Activated B cell treated with CpG ODN at 0.5 μM for 24 hours (primary cell): ENCODE measurements at regions of chr13 and their contacts with region 1.

Region 1: GRCh38 chr13:27449936-27450828 is at the start of gene MTIF3:
- DNase-seq: peak; percentile 89
- ATAC-seq: peak; percentile 81
- H3K4me3 Mint-ChIP-seq: peak within 1 kb of the TSS; percentile 96
- H3K27ac Mint-ChIP-seq: peak within 1 kb of the TSS; percentile 98
- H3K4me1 Mint-ChIP-seq: peaks cover 69% of the 10 kb centered on the region
- H3K27me3 Mint-ChIP-seq: no peaks in the 10 kb centered on the region
- CTCF ChIP-seq: no peak
- total RNA-seq, gene MTIF3: 39.8 and 50.1 TPM in 2 replicates

Region 2: GRCh38 chr13:26253787-26254582 is 1196.2 kb before region 1 on chr13 and contains the start of gene CDK8:
- CTCF ChIA-PET with region 1: no interaction called
- POLR2A ChIA-PET with region 1: no interaction called
- intact Hi-C with region 1: loop called (anchors 10 kb)
- DNase-seq: peak; percentile 87
- ATAC-seq: peak; percentile 86
- H3K4me3 Mint-ChIP-seq: peak within 1 kb of the TSS; percentile 92
- H3K27ac Mint-ChIP-seq: peak within 1 kb of the TSS; percentile 88
- H3K4me1 Mint-ChIP-seq: peaks cover 36% of the 10 kb centered on the region
- H3K27me3 Mint-ChIP-seq: no peaks in the 10 kb centered on the region
- CTCF ChIP-seq: no peak
- total RNA-seq, gene CDK8: 10.9 and 12.8 TPM in 2 replicates

Region 3: GRCh38 chr13:27374650-27375049 is 75.5 kb before region 1 on chr13:
- CTCF ChIA-PET with region 1: no interaction called
- POLR2A ChIA-PET with region 1: no interaction called
- intact Hi-C with region 1: loop called (anchors 2 kb)
- DNase-seq: no peak
- ATAC-seq: peak; percentile 88
- H3K4me3 Mint-ChIP-seq: no peak overlapping the region
- H3K27ac Mint-ChIP-seq: no peak overlapping the region
- H3K4me1 Mint-ChIP-seq: peaks cover 2% of the 10 kb centered on the region
- H3K27me3 Mint-ChIP-seq: peaks cover 22% of the 10 kb centered on the region
- CTCF ChIP-seq: peak; percentile 75

Region 4: DNA sequence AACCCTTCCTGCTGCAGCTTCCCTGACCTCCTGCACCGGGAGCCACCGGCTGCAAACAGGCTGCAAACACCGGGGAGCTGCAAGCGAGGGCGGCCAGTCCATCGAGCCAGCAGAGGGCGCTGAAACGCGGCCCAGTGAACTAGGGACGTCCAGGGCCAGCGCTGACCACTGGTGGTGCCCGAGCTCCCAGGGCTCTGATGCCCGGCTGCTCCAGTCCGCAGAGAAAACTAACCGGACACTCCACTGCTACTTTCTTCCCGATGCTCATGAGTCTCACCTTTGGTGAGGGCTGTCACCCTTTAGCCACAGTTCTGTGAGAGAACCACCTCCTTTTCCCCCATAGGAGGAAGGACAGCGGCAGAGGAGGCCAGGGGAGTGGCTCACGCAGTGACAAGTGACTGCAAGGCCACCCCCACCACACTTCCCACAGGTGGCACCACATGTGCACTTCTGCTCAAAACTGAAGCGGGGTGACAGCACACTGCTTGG is 83.0 kb after region 1 on chr13:
- CTCF ChIA-PET with region 1: no interaction called
- POLR2A ChIA-PET with region 1: interaction called, 3 read pairs
- intact Hi-C with region 1: loop called (anchors 1 kb)
- DNase-seq: peak; percentile 39
- ATAC-seq: peak; percentile 72
- H3K4me3 Mint-ChIP-seq: peak overlapping the region; percentile 36
- H3K27ac Mint-ChIP-seq: no peak overlapping the region
- H3K4me1 Mint-ChIP-seq: peaks cover 23% of the 10 kb centered on the region
- H3K27me3 Mint-ChIP-seq: no peaks in the 10 kb centered on the region
- CTCF ChIP-seq: peak; percentile 53

Region 5: DNA sequence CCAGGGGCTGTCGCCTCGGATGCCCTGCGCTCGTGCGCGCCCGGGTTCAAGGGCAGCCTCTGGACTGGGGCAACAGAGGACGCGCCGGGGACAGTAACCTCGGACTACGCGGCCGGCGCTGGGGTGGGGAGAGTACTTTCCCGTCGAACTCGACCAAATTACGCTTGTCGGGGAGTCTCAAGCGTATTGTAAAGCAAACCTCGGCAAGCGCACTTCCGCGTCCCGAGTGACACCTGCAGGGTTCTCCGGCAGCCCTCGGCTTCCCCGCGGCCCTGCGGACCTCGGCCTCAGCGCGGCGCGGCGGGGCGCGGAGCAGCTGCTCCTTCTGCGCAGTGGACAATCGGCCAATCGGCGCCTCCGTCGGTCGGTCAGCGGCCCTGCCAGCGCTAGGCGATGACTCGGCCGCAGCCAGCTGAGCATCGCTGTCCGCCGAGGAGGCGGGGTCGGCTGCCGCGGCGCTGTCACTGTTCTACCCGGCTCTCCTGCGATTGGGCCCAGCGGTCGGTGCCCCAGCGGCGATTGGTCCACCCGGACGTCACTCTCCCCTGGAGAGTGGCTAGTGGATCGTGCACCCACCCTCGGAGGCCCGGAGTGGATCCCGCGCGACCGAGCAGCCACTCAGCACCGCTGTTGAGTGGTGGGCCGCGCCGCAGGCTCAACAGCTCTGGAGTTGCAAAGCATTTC is 1268.5 kb after region 1 on chr13 and contains the start of gene SLC46A3:
- CTCF ChIA-PET with region 1: no interaction called
- POLR2A ChIA-PET with region 1: no interaction called
- intact Hi-C with region 1: loop called (anchors 10 kb)
- DNase-seq: peak; percentile 95
- ATAC-seq: peak; percentile 98
- H3K4me3 Mint-ChIP-seq: peak within 1 kb of the TSS; percentile 92
- H3K27ac Mint-ChIP-seq: peak within 1 kb of the TSS; percentile 92
- H3K4me1 Mint-ChIP-seq: peaks cover 23% of the 10 kb centered on the region
- H3K27me3 Mint-ChIP-seq: no peaks in the 10 kb centered on the region
- CTCF ChIP-seq: no peak
- total RNA-seq, gene SLC46A3: 8.6 and 11.8 TPM in 2 replicates